ENCODE measurements at regions of chr6 and their contacts with region 1.

Region 1: DNA sequence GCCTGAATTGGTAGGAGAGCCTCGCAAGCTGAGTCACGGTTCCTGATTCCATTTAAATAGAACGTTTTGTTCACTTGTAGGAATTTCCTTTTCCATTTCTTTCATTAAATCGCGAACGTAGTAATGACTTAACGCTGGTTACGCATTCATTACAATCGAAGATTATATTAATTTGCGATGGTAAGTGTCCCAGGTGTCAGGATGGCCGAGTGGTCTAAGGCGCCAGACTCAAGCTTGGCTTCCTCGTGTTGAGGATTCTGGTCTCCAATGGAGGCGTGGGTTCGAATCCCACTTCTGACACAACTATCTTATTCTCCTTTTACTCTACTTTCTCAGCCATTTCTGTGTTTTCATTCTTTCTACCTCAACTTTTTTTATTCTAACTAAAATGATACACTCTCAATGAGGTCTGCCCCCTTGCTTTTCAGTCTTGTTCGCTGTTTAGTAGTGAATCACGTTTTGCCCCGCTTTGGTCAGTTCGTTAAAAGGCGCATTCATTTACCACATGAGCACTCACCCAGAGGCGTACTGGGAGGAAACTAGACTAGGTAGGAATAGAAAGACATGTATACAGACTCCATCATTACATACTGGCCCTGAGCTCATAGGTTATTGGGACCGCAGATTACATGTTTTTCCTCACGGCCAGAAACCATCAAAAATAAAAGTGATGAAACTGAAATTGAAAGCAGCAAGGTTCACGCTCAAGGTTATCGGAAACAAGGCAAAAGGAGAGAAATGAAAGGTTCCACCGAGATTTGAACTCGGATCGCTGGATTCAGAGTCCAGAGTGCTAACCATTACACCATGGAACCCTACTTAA is 17.3 kb upstream of the TRIM27 start:
- DNase-seq: peak; percentile 35 to 90 (median 83)
- ATAC-seq: peak; percentile 76
- H3K4me3 ChIP-seq: peak overlapping the region; percentile 82
- H3K4me3 Mint-ChIP-seq: peak overlapping the region; percentile 86 to 99 (median 92)
- H3K27ac ChIP-seq: peak overlapping the region; percentile 60
- H3K27ac Mint-ChIP-seq: peak overlapping the region; percentile 90 to 99 (median 94)
- H3K4me1 ChIP-seq: peaks cover 22 to 30% of the 10 kb centered on the region in 2 donors
- H3K4me1 Mint-ChIP-seq: peaks cover 34 to 64% (median 56%) of the 10 kb centered on the region in 7 donors
- H3K27me3 ChIP-seq: no peaks in the 10 kb centered on the region
- H3K27me3 Mint-ChIP-seq: peaks cover 0 to 6% (median 0%) of the 10 kb centered on the region in 5 donors

Region 2: DNA sequence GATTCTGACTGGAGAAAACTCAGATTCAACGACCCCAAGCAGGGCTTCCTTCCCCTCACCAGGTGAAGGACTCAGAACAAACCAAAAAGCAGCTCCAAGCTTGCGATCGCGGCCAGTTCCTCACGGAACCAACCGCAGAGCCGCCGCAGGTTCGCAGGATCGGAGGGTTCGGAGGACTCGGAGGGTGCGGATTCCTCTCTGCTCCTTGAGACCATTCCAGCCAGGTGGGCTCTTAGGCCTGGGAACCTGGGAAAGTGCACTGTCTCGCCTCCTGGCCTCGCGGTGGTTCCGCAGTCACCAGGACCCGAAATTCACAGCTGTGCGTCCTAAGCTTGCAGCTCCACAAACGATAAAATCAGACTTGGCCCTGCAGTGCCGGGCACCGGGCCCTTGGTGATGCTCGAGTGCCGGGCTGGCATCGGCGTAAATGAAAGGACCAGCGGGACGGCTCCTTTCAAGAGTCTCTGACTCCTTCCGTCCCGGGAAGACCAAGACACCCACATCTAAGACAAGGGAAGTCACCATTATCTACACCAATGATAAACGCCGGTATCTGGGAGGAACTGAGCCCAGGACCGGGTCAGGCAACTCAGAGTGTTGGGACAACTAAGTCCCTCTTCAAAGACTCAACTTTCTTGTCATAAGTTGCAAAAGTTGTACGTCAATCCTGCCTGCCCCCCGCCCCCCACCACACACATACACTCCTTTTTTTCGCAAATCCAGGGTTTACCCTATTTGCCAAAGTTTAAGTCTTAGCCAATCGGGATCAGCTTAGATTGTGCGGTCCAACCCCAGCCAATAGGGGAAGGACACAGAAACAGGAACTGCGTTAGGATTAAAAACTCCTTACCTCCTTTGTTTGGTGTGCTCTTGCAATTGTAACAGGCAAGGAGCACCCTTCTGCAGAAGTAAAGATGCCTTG is 1763.3 kb before region 1 on chr6:
- CTCF ChIA-PET with region 1: no interaction called
- POLR2A ChIA-PET with region 1: no interaction called
- intact Hi-C with region 1: loop called in 1 of 2 experiments (anchors 10 kb)
- DNase-seq: peak; percentile 49 to 78 (median 66)
- ATAC-seq: peak; percentile 83
- H3K4me3 ChIP-seq: peak overlapping the region; percentile 99
- H3K4me3 Mint-ChIP-seq: peak overlapping the region; percentile 90 to 98 (median 96)
- H3K27ac ChIP-seq: peak overlapping the region; percentile 74
- H3K27ac Mint-ChIP-seq: peak overlapping the region; percentile 79 to 100 (median 95)
- H3K4me1 ChIP-seq: peaks cover 0 to 3% of the 10 kb centered on the region in 2 donors
- H3K4me1 Mint-ChIP-seq: peaks cover 0 to 33% (median 14%) of the 10 kb centered on the region in 7 donors
- H3K27me3 ChIP-seq: no peaks in the 10 kb centered on the region
- H3K27me3 Mint-ChIP-seq: peaks cover 0 to 37% (median 0%) of the 10 kb centered on the region in 5 donors

Region 3: GRCh38 chr6:27864906-27865849 is 1075.9 kb before region 1 on chr6:
- CTCF ChIA-PET with region 1: no interaction called
- POLR2A ChIA-PET with region 1: interaction called, 5 read pairs
- intact Hi-C with region 1: loop called in 1 of 2 experiments (anchors 5 kb)
- DNase-seq: peak; percentile 56 to 93 (median 89)
- ATAC-seq: peak; percentile 85
- H3K4me3 ChIP-seq: peak overlapping the region; percentile 74
- H3K4me3 Mint-ChIP-seq: peak overlapping the region; percentile 85 to 99 (median 97)
- H3K27ac ChIP-seq: peak overlapping the region; percentile 71
- H3K27ac Mint-ChIP-seq: peak overlapping the region; percentile 88 to 98 (median 95)
- H3K4me1 ChIP-seq: peaks cover 8 to 25% of the 10 kb centered on the region in 2 donors
- H3K4me1 Mint-ChIP-seq: peaks cover 22 to 64% (median 46%) of the 10 kb centered on the region in 7 donors
- H3K27me3 ChIP-seq: no peaks in the 10 kb centered on the region
- H3K27me3 Mint-ChIP-seq: peaks cover 0 to 16% (median 0%) of the 10 kb centered on the region in 5 donors

Region 4: DNA sequence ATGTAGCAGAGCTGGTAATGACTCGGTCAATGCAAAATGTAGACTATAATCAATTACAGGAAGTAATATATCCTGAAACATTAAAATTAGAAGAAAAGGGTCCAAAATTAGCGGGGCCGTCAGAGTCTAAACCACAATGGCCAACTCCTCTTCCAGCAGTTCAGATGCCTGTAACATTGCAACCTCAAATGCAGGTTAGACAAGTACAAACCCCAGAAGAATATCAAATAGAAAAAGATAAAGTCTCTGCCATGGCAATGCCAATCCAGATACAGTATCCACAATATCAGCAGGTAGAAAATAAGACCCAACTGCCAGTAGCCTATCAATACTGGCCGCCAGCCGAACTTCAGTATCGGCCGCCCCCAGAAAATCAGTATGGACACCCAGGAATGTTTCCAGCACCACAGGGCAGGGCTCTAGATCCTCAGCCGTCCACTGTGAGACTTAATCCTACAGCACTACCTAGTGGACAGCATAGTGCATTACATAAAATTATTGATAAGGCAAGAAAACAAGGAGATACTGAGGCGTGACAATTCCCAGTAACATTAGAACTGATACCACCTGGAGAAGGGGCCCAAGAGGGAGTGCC is 257.0 kb before region 1 on chr6:
- CTCF ChIA-PET with region 1: no interaction called
- POLR2A ChIA-PET with region 1: no interaction called
- intact Hi-C with region 1: loop called in 1 of 2 experiments (anchors 1 kb)
- DNase-seq: peak in 7 of 9 donors; percentile 17 to 50 (median 40)
- ATAC-seq: peak; percentile 80
- H3K4me3 ChIP-seq: no peak overlapping the region
- H3K4me3 Mint-ChIP-seq: no peak overlapping the region
- H3K27ac ChIP-seq: no peak overlapping the region
- H3K27ac Mint-ChIP-seq: no peak overlapping the region
- H3K4me1 ChIP-seq: no peaks in the 10 kb centered on the region
- H3K4me1 Mint-ChIP-seq: peaks cover 0 to 17% (median 0%) of the 10 kb centered on the region in 7 donors
- H3K27me3 ChIP-seq: no peaks in the 10 kb centered on the region
- H3K27me3 Mint-ChIP-seq: peaks cover 66 to 89% (median 80%) of the 10 kb centered on the region in 5 donors

Region 5: GRCh38 chr6:28880894-28881780 is 59.9 kb before region 1 on chr6:
- CTCF ChIA-PET with region 1: interaction called, 7 read pairs
- POLR2A ChIA-PET with region 1: interaction called, 17 read pairs
- intact Hi-C with region 1: loop called (anchors 1 kb)
- DNase-seq: peak in 8 of 9 donors; percentile 39 to 73 (median 57)
- ATAC-seq: no peak
- H3K4me3 ChIP-seq: peak overlapping the region; percentile 57
- H3K4me3 Mint-ChIP-seq: peak overlapping the region; percentile 12 to 92 (median 89)
- H3K27ac ChIP-seq: peak overlapping the region; percentile 12
- H3K27ac Mint-ChIP-seq: peak overlapping the region; percentile 14 to 98 (median 91)
- H3K4me1 ChIP-seq: peaks cover 8 to 26% of the 10 kb centered on the region in 2 donors
- H3K4me1 Mint-ChIP-seq: peaks cover 19 to 55% (median 45%) of the 10 kb centered on the region in 7 donors
- H3K27me3 ChIP-seq: no peaks in the 10 kb centered on the region
- H3K27me3 Mint-ChIP-seq: peaks cover 0 to 39% (median 3%) of the 10 kb centered on the region in 5 donors

Region 6: GRCh38 chr6:28923318-28924102 is 17.6 kb before region 1 on chr6 and contains the start of gene TRIM27:
- CTCF ChIA-PET with region 1: interaction called, 4 read pairs
- POLR2A ChIA-PET with region 1: interaction called, 125 read pairs
- intact Hi-C with region 1: loop called (anchors 1 kb)
- DNase-seq: peak; percentile 67 to 87 (median 80)
- ATAC-seq: peak; percentile 89
- H3K4me3 ChIP-seq: peak within 1 kb of the TSS; percentile 87
- H3K4me3 Mint-ChIP-seq: peak within 1 kb of the TSS; percentile 87 to 99 (median 95)
- H3K27ac ChIP-seq: peak within 1 kb of the TSS; percentile 86
- H3K27ac Mint-ChIP-seq: peak within 1 kb of the TSS; percentile 86 to 96 (median 92)
- H3K4me1 ChIP-seq: peaks cover 20 to 34% of the 10 kb centered on the region in 2 donors
- H3K4me1 Mint-ChIP-seq: peaks cover 28 to 52% (median 41%) of the 10 kb centered on the region in 7 donors
- H3K27me3 ChIP-seq: no peaks in the 10 kb centered on the region
- H3K27me3 Mint-ChIP-seq: no peaks in the 10 kb centered on the region
- total RNA-seq, gene TRIM27: 22.9 to 93.9 (median 67.5) TPM

Region 7: GRCh38 chr6:28981833-28982475 is 40.9 kb after region 1 on chr6:
- CTCF ChIA-PET with region 1: interaction called, 4 read pairs
- POLR2A ChIA-PET with region 1: no interaction called
- intact Hi-C with region 1: loop called (anchors 1 kb)
- DNase-seq: peak; percentile 48 to 89 (median 86)
- ATAC-seq: peak; percentile 81
- H3K4me3 ChIP-seq: peak overlapping the region; percentile 99
- H3K4me3 Mint-ChIP-seq: peak overlapping the region; percentile 85 to 100 (median 92)
- H3K27ac ChIP-seq: peak overlapping the region; percentile 47
- H3K27ac Mint-ChIP-seq: peak overlapping the region; percentile 87 to 100 (median 99)
- H3K4me1 ChIP-seq: peaks cover 7 to 18% of the 10 kb centered on the region in 2 donors
- H3K4me1 Mint-ChIP-seq: peaks cover 30 to 80% (median 66%) of the 10 kb centered on the region in 7 donors
- H3K27me3 ChIP-seq: no peaks in the 10 kb centered on the region
- H3K27me3 Mint-ChIP-seq: peaks cover 14 to 61% (median 36%) of the 10 kb centered on the region in 5 donors

Region 8: DNA sequence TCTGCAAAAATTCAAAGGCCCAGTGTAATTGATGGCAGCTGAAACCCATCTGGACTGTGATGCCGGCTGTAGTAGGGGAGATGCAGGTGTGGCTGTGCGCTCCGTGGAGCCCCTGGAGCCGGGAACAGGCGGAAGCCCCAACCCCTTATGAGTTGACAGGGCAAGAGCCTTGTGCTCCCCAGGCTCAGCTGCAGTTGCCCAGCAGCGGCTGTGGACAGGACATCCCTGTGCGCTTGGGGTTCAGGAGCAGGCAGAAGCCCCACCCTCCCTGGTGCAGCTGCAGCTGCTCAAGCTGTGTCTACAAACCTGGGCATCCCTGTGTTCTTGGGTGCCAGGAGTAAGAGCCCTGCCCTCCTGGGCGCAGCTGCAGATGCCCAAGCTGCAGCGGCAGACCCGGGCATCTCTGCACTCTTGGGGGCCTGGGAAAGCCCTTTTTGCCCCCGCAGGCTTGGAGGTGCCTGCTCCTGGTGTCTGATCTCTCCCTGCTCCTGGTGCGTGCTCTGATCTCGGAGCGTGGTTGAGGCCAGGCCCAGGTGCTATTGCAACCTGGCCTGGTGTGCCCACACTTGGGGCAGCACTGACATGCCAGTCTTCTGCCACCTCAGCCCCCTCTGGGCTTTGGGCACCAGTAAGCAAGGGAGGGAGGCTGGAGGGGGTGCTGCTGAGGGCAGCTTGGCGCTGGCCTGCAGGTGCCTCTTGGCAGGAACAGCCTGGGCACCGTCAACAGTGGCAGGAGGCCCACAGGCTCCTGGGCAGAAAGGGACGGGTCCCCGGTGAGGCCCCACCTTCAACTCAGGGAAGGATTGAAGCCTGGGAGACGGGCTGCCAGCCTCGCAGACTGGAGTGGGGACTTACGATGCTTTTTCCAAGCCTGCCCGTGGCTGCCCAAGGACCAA is 259.9 kb after region 1 on chr6:
- CTCF ChIA-PET with region 1: no interaction called
- POLR2A ChIA-PET with region 1: no interaction called
- intact Hi-C with region 1: no loop called
- DNase-seq: no peak
- ATAC-seq: no peak
- H3K4me3 ChIP-seq: no peak overlapping the region
- H3K4me3 Mint-ChIP-seq: no peak overlapping the region
- H3K27ac ChIP-seq: no peak overlapping the region
- H3K27ac Mint-ChIP-seq: no peak overlapping the region
- H3K4me1 ChIP-seq: no peaks in the 10 kb centered on the region
- H3K4me1 Mint-ChIP-seq: peaks cover 0 to 4% (median 0%) of the 10 kb centered on the region in 7 donors
- H3K27me3 ChIP-seq: no peaks in the 10 kb centered on the region
- H3K27me3 Mint-ChIP-seq: peaks cover 0 to 13% (median 5%) of the 10 kb centered on the region in 5 donors

Region 9: DNA sequence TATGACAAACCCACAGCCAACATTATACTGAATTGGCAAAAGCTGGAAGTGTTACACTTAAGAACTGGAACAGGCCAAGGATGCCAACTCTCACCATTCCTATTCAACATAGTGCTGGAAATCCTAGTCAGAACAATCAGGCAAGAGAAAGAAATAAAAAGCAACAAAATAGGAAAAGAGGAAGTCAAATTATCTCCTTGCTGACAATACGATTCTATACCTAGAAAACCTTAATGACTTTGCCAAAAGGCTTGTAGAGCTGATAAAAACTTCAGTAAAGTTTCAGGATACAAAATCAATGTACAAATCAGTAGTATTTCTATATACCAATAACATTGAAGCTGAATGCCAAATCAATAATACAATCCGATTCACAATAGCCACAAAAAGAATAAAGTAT is 395.2 kb after region 1 on chr6:
- CTCF ChIA-PET with region 1: no interaction called
- POLR2A ChIA-PET with region 1: no interaction called
- intact Hi-C with region 1: no loop called
- DNase-seq: no peak
- ATAC-seq: no peak
- H3K4me3 ChIP-seq: no peak overlapping the region
- H3K4me3 Mint-ChIP-seq: no peak overlapping the region
- H3K27ac ChIP-seq: no peak overlapping the region
- H3K27ac Mint-ChIP-seq: no peak overlapping the region
- H3K4me1 ChIP-seq: no peaks in the 10 kb centered on the region
- H3K4me1 Mint-ChIP-seq: no peaks in the 10 kb centered on the region
- H3K27me3 ChIP-seq: no peaks in the 10 kb centered on the region
- H3K27me3 Mint-ChIP-seq: peaks cover 4 to 63% (median 59%) of the 10 kb centered on the region in 5 donors